T-cell (primary cell): ENCODE measurements at regions of chr1 and their contacts with region 1.

Region 1: DNA sequence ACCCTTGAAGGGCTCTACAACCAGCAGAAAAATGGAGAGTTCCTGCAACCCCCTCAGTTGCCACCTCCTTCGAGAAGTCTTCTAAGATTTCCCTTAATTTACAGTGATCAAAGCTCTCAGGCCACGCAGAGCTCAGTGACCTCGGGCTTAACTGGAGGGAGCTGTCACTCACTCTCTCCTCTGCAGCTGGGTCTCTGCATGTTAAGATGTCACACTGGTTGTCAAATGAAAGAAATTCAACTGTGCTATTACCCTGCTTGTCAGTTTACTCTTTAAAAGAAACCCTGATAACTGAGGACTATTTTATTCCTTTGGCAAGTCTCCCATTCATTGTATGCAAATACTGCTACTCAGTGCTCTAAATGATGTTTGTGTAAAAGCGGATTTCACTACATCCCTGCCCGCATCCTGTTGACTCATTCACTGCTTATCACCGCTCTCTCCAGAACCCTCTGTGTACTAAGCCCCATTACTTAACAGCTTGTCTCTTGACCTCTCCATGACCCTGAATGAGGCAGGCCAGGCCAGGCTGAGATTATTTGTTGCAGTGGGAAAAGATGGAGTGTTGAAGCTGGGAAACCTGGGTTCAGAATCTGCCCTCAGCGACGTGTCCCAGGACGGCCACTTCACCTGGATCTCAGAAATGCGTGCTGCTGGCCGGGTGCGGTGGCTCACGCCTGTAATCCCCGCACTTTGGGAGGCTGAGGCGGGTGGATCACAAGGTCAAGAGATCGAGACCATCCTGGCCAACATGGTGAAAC is 13.7 kb downstream of the DHRS3 start:
- DNase-seq: peak; percentile 24 to 80 (median 61)
- ATAC-seq: peak; percentile 92 to 98 (median 98)
- H3K4me3 ChIP-seq: no peak overlapping the region
- H3K4me3 Mint-ChIP-seq: peak overlapping the region; percentile 28 to 78 (median 62)
- H3K27ac ChIP-seq: peak overlapping the region; percentile 65
- H3K27ac Mint-ChIP-seq: peak overlapping the region; percentile 72 to 94
- H3K4me1 ChIP-seq: peaks cover 18 to 50% of the 10 kb centered on the region in 2 experiments
- H3K4me1 Mint-ChIP-seq: peaks cover 57 to 85% (median 83%) of the 10 kb centered on the region in 3 donors
- H3K27me3 ChIP-seq: no peaks in the 10 kb centered on the region
- H3K27me3 Mint-ChIP-seq: no peaks in the 10 kb centered on the region

Region 2: DNA sequence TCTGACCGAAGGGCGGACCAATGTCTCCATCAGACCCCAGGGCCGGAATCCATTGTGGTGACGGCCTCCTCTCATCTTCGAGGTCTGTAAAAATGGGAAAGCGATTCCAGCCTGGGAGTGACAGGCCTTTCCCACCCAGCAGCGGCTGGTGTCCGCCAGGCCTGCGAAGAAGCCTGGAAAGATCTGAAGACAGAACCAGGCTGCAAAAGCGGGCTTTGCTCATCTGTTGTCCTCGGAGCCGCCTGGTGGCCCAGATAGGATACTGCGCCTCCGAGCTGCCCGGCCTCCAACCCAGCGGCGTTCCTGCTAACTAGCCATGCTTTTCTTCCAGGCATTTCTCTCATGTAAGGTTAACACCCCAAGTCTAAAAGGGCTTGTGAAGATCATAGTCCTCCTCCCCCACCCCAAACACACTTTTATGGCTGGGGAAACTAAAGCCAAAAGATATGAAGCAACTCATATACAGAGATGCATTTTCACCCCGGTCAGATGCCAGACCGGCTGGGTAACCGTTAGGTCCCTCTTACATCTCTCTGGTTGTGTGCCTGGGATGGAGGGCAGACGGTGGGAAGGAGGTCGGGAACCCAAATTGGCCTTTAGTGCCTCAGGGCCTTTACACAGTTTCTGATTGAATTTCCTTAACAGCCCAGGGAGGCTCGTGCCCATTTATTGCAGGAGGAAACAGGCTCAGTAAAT is 15.6 kb after region 1 on chr1:
- CTCF ChIA-PET with region 1: interaction called, 3 to 47 read pairs
- POLR2A ChIA-PET with region 1: interaction called, 4 to 18 read pairs
- DNase-seq: peak; percentile 48 to 86 (median 70)
- ATAC-seq: peak; percentile 39 to 59 (median 46)
- H3K4me3 ChIP-seq: peak overlapping the region; percentile 44 to 87
- H3K4me3 Mint-ChIP-seq: peak overlapping the region; percentile 97 to 99 (median 98)
- H3K27ac ChIP-seq: no peak overlapping the region
- H3K27ac Mint-ChIP-seq: peak overlapping the region; percentile 72 to 76
- H3K4me1 ChIP-seq: peaks cover 11 to 57% of the 10 kb centered on the region in 2 experiments
- H3K4me1 Mint-ChIP-seq: peaks cover 36 to 49% (median 45%) of the 10 kb centered on the region in 3 donors
- H3K27me3 ChIP-seq: peaks cover 0 to 16% of the 10 kb centered on the region in 2 experiments
- H3K27me3 Mint-ChIP-seq: peaks cover 0 to 2% of the 10 kb centered on the region in 2 donors